ENCODE measurements at regions of chrX and their contacts with region 1.

Region 1: DNA sequence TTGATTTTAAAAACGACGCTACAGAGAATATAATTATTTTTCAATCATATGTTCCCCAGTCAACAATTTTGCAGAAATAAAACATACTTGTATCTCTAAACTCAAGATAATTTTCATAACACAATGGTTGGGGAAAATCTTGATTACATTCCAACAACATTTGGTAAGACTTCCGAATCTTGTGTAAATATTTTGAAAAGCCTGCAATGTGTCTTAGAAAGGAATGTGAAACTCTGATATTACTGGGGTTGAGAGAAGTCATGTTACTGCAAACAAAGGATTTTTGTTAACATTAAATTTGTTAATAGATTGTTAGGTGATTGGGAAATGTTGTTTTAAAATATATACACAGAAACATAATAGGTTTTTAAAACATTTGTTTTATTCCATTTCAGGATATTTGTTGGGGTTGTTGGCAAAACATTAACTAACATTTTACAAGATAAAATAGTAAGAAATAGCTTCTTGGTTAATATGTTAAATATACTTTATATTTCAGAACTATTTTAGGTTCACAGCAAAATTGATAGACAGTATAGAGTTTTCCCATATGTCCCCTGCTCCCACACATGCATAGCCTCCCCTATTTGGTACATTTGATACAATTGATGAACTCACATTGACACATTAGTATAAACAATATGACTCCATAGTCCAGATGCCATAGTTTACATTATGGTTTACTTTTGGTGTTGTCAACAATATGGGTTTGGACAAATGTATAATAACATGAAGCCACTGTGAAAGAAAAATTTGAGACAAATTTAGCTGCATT is 218.6 kb upstream of the FAM47A start:
- DNase-seq: no peak
- ATAC-seq: no peak
- H3K4me3 ChIP-seq: no peak overlapping the region
- H3K4me3 Mint-ChIP-seq: no peak overlapping the region
- H3K27ac ChIP-seq: no peak overlapping the region
- H3K27ac Mint-ChIP-seq: no peak overlapping the region
- H3K4me1 ChIP-seq: no peaks in the 10 kb centered on the region
- H3K4me1 Mint-ChIP-seq: no peaks in the 10 kb centered on the region
- H3K27me3 ChIP-seq: no peaks in the 10 kb centered on the region
- H3K27me3 Mint-ChIP-seq: no peaks in the 10 kb centered on the region
- CTCF ChIP-seq: no peak

Region 2: DNA sequence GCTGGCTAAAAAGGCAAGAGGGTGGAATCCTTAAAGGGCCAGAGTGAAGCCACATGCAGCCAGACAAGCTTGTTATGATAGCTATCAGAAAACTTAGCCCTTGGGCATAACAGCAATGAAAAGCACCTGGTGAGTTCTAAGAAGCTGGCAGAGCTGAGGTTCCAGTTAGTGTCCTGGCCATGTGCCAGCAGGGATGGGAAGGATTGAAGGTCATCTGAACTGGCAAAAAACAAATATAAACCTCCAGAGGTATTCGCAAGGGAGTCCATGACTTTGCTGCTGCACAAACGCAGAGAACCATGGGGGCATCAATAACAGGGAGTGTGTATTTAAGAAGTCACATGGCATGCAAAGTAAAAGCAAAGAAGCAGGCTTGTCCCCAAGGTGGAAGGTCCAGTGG is 427.5 kb before region 1 on chrX:
- CTCF ChIA-PET with region 1: no interaction called
- POLR2A ChIA-PET with region 1: no interaction called
- intact Hi-C with region 1: loop called in 1 of 2 experiments (anchors 10 kb)
- DNase-seq: no peak
- ATAC-seq: no peak
- H3K4me3 ChIP-seq: no peak overlapping the region
- H3K4me3 Mint-ChIP-seq: no peak overlapping the region
- H3K27ac ChIP-seq: no peak overlapping the region
- H3K27ac Mint-ChIP-seq: no peak overlapping the region
- H3K4me1 ChIP-seq: no peaks in the 10 kb centered on the region
- H3K4me1 Mint-ChIP-seq: no peaks in the 10 kb centered on the region
- H3K27me3 ChIP-seq: no peaks in the 10 kb centered on the region
- H3K27me3 Mint-ChIP-seq: no peaks in the 10 kb centered on the region
- CTCF ChIP-seq: no peak

Region 3: GRCh38 chrX:34270434-34270833 is 80.3 kb before region 1 on chrX:
- CTCF ChIA-PET with region 1: no interaction called
- POLR2A ChIA-PET with region 1: no interaction called
- intact Hi-C with region 1: no loop called
- DNase-seq: no peak
- ATAC-seq: no peak
- H3K4me3 ChIP-seq: no peak overlapping the region
- H3K4me3 Mint-ChIP-seq: no peak overlapping the region
- H3K27ac ChIP-seq: no peak overlapping the region
- H3K27ac Mint-ChIP-seq: no peak overlapping the region
- H3K4me1 ChIP-seq: no peaks in the 10 kb centered on the region
- H3K4me1 Mint-ChIP-seq: no peaks in the 10 kb centered on the region
- H3K27me3 ChIP-seq: no peaks in the 10 kb centered on the region
- H3K27me3 Mint-ChIP-seq: no peaks in the 10 kb centered on the region
- CTCF ChIP-seq: no peak

Region 4: DNA sequence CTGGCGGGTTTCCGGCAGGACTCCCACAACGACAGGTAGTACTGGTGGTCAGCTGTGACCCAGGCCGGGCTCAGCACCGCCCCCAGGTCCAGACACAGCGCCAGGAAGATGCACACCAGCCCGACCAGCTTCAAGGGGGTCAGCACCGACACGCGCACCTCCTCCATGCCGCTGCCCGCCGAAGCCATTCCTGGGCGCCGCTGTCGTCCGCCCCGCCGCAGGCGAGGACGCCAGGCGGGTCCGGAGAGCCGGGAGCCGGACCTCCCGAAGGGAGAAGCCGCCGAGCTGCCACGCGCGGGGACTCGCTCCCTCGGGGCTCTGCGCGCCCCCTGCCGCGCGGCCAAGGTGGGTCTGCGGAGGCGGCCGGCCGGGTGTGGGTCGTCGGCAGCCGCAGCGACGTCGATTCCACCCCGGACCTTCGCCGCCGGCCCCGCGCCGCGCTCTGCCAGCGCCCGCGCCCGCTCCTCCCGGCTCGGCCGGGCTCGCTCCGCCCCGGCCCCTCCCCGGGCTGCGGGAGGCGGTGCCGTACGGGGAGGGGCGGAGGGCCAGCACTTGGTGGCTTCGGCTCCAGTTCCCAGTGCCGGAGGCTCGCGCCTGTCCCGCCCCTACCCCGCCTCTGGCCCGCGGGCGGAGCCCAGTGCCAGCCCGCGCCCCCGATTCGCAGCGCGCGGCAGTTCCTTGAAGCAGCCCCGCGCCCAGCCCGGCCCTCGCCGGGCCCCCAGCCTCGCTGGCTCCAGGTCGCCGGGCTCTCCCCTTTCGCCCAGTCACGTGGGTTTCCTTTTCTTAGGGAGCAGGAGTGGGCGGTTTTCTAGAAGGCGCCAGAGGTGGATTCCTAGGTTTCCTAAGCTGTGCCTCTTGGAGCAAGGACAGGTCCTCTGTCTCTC is 306.3 kb after region 1 on chrX and contains the start of gene TMEM47:
- CTCF ChIA-PET with region 1: no interaction called
- POLR2A ChIA-PET with region 1: no interaction called
- intact Hi-C with region 1: no loop called
- DNase-seq: no peak
- ATAC-seq: no peak
- H3K4me3 ChIP-seq: no peak within 1 kb of the TSS
- H3K4me3 Mint-ChIP-seq: no peak within 1 kb of the TSS
- H3K27ac ChIP-seq: no peak within 1 kb of the TSS
- H3K27ac Mint-ChIP-seq: no peak within 1 kb of the TSS
- H3K4me1 ChIP-seq: no peaks in the 10 kb centered on the region
- H3K4me1 Mint-ChIP-seq: no peaks in the 10 kb centered on the region
- H3K27me3 ChIP-seq: no peaks in the 10 kb centered on the region
- H3K27me3 Mint-ChIP-seq: peaks cover 13% of the 10 kb centered on the region
- CTCF ChIP-seq: no peak
- total RNA-seq, gene TMEM47: not detected

Region 5: DNA sequence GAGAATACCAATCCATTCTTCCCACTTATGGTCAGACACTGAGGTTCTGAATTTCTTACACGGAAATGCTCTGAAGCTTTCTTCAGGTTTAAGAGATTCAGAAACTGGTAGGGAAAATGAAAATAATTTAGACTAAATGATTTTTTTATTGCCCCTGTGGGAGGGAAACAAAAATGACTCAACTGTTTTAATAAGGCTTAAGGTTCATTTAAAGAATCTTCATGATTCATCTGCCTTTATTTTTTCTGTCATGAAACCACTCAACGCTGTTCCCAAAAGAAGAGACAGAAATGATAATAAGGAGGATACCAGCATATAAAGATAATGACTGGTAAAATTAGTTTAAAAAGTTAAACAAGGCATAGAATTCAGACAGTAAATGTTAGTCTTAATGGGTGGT is 552.6 kb after region 1 on chrX:
- CTCF ChIA-PET with region 1: no interaction called
- POLR2A ChIA-PET with region 1: no interaction called
- intact Hi-C with region 1: no loop called
- DNase-seq: no peak
- ATAC-seq: no peak
- H3K4me3 ChIP-seq: no peak overlapping the region
- H3K4me3 Mint-ChIP-seq: no peak overlapping the region
- H3K27ac ChIP-seq: no peak overlapping the region
- H3K27ac Mint-ChIP-seq: no peak overlapping the region
- H3K4me1 ChIP-seq: no peaks in the 10 kb centered on the region
- H3K4me1 Mint-ChIP-seq: no peaks in the 10 kb centered on the region
- H3K27me3 ChIP-seq: no peaks in the 10 kb centered on the region
- H3K27me3 Mint-ChIP-seq: no peaks in the 10 kb centered on the region
- CTCF ChIP-seq: no peak